A673 (cell line): ENCODE measurements at regions of chr13 and their contacts with region 1.

Region 1: GRCh38 chr13:29362849-29363604 is 232.5 kb downstream of the SLC7A1 start:
- DNase-seq: peak; percentile 66
- H3K4me3 ChIP-seq: no peak overlapping the region
- H3K27ac ChIP-seq: no peak overlapping the region
- H3K4me1 ChIP-seq: no peaks in the 10 kb centered on the region
- H3K27me3 ChIP-seq: no peaks in the 10 kb centered on the region
- CTCF ChIP-seq: peak; percentile 92

Region 2: DNA sequence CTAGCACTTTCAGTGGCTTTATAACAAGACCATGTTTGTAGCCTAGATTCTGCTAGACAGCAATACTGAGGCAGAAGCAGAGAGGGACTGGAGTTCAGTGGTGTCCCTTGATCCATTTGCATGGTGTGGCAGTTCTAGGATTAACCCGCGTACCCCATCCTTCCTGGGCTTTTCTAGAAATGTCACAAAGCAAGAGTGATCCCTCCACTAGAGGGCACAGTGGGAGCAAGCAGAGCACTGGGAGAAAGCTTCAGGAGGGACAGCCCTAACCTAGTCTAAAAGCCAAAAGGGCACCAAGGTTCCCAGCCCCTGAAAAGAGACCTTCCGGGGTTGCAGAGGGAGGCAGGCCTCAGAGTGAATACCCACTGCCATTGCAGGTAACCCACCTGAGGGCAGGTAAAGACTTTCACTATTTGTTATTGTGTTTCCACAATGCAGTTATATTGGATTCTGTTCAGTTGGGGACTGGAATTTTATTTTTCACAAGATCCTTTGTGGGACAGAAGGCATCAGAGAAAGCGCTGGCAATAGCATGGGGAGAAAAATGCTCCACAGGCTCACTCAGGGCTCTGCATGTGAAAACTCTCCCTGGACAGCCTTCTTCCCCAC is 1038.7 kb before region 1 on chr13:
- CTCF ChIA-PET with region 1: no interaction called
- POLR2A ChIA-PET with region 1: no interaction called
- intact Hi-C with region 1: loop called (anchors 10 kb)
- DNase-seq: peak; percentile 81
- H3K4me3 ChIP-seq: no peak overlapping the region
- H3K27ac ChIP-seq: no peak overlapping the region
- H3K4me1 ChIP-seq: peaks cover 12% of the 10 kb centered on the region
- H3K27me3 ChIP-seq: no peaks in the 10 kb centered on the region
- CTCF ChIP-seq: peak; percentile 90

Region 3: DNA sequence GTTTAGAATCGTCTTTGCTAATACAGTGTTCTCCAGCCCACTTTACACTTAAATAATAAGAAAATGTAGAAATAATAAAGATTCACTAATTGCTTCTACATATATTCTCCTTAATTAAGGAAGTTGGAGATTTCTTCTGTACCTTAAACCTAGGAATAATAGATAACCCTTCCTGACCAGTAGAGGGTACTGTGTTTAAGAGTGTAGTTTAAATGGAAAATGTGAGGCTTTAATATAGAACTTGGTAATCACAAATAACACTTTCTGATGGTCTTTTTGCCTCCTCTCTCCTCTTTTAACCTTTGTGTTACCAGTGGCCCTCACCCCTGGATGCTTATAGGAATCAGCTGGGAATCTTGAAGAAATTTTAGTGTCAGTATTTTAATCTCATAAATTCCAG is 683.4 kb before region 1 on chr13:
- CTCF ChIA-PET with region 1: no interaction called
- POLR2A ChIA-PET with region 1: no interaction called
- intact Hi-C with region 1: loop called (anchors 10 kb)
- DNase-seq: peak; percentile 27
- H3K4me3 ChIP-seq: no peak overlapping the region
- H3K27ac ChIP-seq: no peak overlapping the region
- H3K4me1 ChIP-seq: no peaks in the 10 kb centered on the region
- H3K27me3 ChIP-seq: no peaks in the 10 kb centered on the region
- CTCF ChIP-seq: peak; percentile 61

Region 4: DNA sequence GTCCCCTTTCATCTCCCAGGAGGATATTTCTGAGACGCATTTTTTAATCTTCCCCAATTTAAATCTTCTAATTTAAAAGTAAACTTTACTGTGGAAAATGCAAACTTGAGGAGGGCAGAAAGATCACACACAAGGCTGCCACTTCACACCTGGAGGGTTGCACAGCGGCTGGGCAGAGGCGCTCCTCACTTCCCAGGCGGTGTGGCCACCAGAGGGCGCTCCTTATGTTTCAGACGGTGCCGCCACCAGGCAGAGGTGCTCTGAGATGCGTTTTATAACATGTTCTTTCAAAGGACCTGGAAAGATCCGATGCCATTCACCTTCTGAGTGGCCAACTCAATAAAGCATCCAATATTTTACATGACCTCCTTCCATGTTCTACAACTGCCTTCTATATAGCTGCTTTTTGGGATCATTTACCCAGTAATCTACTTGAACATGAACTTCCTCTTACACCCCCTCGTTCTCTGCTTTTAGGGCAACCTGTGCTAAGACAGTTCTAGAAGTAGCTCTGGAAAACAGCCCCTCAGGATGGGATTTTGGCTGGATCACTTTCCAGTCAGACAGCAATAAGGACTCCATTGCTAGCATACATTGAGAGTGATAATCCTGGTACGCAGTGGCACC is 557.7 kb before region 1 on chr13:
- CTCF ChIA-PET with region 1: interaction called, 11 read pairs
- POLR2A ChIA-PET with region 1: no interaction called
- intact Hi-C with region 1: loop called (anchors 5 kb)
- DNase-seq: peak; percentile 44
- H3K4me3 ChIP-seq: no peak overlapping the region
- H3K27ac ChIP-seq: no peak overlapping the region
- H3K4me1 ChIP-seq: no peaks in the 10 kb centered on the region
- H3K27me3 ChIP-seq: peaks cover 7% of the 10 kb centered on the region
- CTCF ChIP-seq: peak; percentile 72

Region 5: DNA sequence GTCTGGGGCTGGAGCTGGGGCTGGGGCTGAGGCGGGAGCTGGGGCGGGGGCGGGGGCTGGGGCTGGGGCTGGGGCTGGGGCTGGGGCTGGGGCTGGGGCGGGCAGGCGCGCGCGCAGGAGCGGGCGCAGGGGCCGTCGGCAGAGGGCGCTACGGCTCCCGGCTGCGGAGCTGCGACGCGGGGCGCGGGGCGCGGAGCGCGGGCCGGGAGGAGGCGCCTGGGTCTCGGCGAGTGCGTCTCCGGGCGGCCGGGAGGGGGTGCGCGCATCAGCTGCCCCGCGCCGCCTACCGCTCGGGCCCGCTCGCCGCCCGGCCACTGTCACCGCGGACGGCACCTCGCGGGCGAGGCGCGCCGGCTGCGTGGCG is 543.3 kb before region 1 on chr13:
- CTCF ChIA-PET with region 1: no interaction called
- POLR2A ChIA-PET with region 1: no interaction called
- intact Hi-C with region 1: loop called (anchors 5 kb)
- DNase-seq: peak; percentile 70
- H3K4me3 ChIP-seq: peak overlapping the region; percentile 26
- H3K27ac ChIP-seq: no peak overlapping the region
- H3K4me1 ChIP-seq: peaks cover 5% of the 10 kb centered on the region
- H3K27me3 ChIP-seq: peaks cover 45% of the 10 kb centered on the region
- CTCF ChIP-seq: 0 out of 2 replicates have a peak, but pooled peaks have one; percentile 10

Region 6: DNA sequence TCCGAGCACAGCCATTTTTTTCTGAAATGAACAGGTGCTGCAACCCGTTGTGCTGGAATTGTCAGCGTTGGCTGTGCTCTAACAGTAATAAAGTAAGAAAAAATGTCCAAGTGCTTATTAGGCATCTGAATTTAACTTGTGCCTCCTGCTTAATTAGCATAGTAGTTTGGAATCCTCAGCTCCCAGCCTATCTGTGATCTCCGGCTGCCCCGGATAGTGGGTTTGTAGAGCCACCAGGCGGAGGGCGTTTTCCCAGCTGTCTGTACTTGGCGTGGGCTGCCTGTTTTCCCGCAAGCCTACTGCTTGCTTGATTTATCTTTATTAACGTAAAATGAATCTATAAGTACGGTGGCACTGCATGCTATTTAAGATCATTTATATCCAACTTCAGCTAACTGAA is 405.0 kb before region 1 on chr13:
- CTCF ChIA-PET with region 1: no interaction called
- POLR2A ChIA-PET with region 1: no interaction called
- intact Hi-C with region 1: loop called (anchors 5 kb)
- DNase-seq: no peak
- H3K4me3 ChIP-seq: no peak overlapping the region
- H3K27ac ChIP-seq: no peak overlapping the region
- H3K4me1 ChIP-seq: no peaks in the 10 kb centered on the region
- H3K27me3 ChIP-seq: peaks cover 20% of the 10 kb centered on the region
- CTCF ChIP-seq: no peak